Activated T-helper 2 cell treated with anti-CD3 and anti-CD28 coated beads, Interferon-gamma antibody, Interleukin-2, Interleukin-4, amounts not matched to agents 10 μg/mL and 5 μg/mL and 100 μg/mL, durations not matched to agents 14 hours and 24 hours and 36 hours (primary cell): ENCODE measurements at regions of chr11 and their contacts with region 1.

Region 1: GRCh38 chr11:45846974-45847910 is at the start of gene CRY2:
- DNase-seq: peak; percentile 96
- H3K4me3 Mint-ChIP-seq: peak within 1 kb of the TSS; percentile 84
- H3K27ac Mint-ChIP-seq: peak within 1 kb of the TSS; percentile 87
- H3K4me1 Mint-ChIP-seq: peaks cover 47% of the 10 kb centered on the region
- H3K27me3 Mint-ChIP-seq: peaks cover 12% of the 10 kb centered on the region
- total RNA-seq, gene CRY2: 21.5 and 24.0 TPM in 2 replicates

Region 2: DNA sequence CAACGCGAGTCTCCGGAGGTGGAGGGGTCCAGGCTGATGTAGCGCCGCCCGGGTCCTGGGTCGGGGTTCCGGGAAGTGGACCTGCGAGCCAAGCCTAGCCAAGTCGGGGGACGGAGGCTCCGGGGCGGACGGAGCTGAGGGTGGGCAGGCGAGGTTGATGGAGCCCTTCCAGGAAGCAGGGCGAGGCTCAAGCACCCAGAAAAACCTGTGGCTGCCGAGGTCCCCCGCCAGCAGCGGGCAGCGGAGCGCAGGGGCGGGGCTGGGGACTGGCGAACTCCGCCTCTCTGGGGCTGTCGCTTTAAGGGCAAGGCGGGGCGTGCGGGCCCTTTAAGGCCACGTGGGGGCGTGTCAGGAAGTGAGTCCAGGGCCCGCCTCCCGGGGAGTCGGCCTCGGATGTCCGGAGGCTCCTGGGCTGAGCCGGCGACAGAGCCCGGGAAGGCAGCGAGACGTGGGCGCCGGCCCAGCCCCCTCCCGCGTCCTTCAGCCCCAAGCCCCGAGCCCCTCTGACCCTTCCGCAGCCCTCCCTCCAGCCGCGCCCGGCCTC is 42.4 kb before region 1 on chr11 and contains the start of gene SLC35C1:
- intact Hi-C with region 1: loop called (anchors 1 kb)
- DNase-seq: peak; percentile 95
- H3K4me3 Mint-ChIP-seq: peak within 1 kb of the TSS; percentile 90
- H3K27ac Mint-ChIP-seq: peak within 1 kb of the TSS; percentile 88
- H3K4me1 Mint-ChIP-seq: peaks cover 30% of the 10 kb centered on the region
- H3K27me3 Mint-ChIP-seq: no peaks in the 10 kb centered on the region
- total RNA-seq, gene SLC35C1: 17.1 and 18.1 TPM in 2 replicates

Region 3: DNA sequence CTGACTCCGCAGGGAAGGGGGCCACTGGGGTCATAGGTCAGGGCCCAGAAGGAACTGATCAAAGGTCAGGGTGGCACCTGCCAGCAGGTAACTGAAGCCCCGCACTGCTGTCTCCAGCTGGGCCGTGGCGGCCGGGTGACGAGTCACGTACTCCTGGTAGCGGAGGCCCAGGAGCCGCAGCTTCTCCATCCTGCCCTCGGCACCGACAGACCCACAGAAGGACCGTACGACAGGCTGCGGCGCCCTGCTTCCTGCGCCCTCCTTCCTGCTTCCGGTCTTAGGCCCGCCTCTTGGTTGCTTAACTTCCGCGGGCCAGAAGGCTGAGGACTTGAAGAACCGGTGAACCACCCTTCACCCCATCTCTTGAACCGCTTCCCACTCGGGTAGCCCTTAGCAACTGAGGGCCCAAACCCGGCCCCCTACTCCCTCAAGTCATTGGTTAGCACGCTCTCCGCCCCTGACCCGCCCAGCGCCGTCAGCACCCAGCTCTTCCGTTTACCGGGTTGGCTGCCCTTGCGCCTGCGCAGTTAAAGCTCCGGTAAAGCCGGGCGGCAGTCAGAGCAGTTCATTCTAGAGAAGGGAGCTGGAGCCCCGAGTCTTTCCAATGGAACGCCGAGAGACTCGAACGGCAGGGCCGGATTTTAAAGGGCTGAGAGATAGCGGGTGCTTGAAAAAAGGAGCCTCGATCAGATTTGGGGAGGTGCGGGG is 70.5 kb after region 1 on chr11 and contains the start of gene PEX16:
- intact Hi-C with region 1: loop called (anchors 1 kb)
- DNase-seq: peak; percentile 98
- H3K4me3 Mint-ChIP-seq: peak within 1 kb of the TSS; percentile 96
- H3K27ac Mint-ChIP-seq: peak within 1 kb of the TSS; percentile 98
- H3K4me1 Mint-ChIP-seq: peaks cover 22% of the 10 kb centered on the region
- H3K27me3 Mint-ChIP-seq: peaks cover 7% of the 10 kb centered on the region
- total RNA-seq, gene PEX16: 30.8 and 38.5 TPM in 2 replicates

Region 4: GRCh38 chr11:45930031-45930794 is 83.0 kb after region 1 on chr11:
- intact Hi-C with region 1: no loop called
- DNase-seq: peak; percentile 22
- H3K4me3 Mint-ChIP-seq: no peak overlapping the region
- H3K27ac Mint-ChIP-seq: peak overlapping the region; percentile 44
- H3K4me1 Mint-ChIP-seq: peaks cover 10% of the 10 kb centered on the region
- H3K27me3 Mint-ChIP-seq: no peaks in the 10 kb centered on the region

Region 5: GRCh38 chr11:46006418-46007070 is 159.3 kb after region 1 on chr11:
- intact Hi-C with region 1: loop called (anchors 10 kb)
- DNase-seq: no peak
- H3K4me3 Mint-ChIP-seq: no peak overlapping the region
- H3K27ac Mint-ChIP-seq: no peak overlapping the region
- H3K4me1 Mint-ChIP-seq: peaks cover 2% of the 10 kb centered on the region
- H3K27me3 Mint-ChIP-seq: no peaks in the 10 kb centered on the region